Panc1 (cell line): ENCODE measurements at regions of chr10 and their contacts with region 1.

Region 1: DNA sequence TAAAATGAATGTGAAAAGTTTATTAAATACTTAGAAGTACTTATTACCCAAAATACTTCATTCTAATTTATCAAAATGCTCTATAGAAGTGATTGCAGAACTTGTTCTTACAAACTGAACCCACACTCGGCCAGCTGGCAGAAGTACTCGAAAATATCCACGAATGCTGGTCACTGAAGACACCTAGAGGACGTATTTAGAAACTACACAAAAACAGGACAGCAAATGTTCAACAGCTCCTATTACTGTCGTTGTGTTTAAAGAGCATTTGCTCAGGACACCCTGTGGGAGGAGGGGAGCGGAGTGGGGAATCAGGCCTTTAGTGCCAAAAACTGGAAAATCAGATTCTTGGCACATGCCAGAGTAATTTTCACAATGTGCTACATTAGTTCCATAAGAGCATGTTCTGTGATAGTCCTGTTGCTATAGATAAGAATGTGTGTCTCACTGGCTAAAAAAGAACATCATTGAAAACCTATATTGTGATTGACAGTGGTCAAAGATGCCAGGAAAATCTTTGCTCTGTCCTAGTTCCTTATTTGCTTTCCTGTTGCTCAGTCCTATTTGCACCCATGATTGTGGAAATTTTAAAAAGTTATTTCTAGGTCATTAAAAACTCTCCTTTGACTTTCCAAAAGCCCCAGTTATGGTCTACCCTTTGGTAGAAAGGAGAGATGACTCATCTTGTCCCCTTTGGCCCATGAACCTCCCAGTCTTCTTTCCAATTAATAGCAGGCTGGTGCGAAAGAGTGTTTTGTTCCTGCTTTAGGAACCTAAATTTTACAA is 49.0 kb upstream of the NRBF2 start:
- DNase-seq: peak; percentile 77
- ATAC-seq: peak; percentile 92
- H3K4me3 ChIP-seq: no peak overlapping the region
- H3K27ac ChIP-seq: no peak overlapping the region
- H3K4me1 ChIP-seq: no peaks in the 10 kb centered on the region
- H3K27me3 ChIP-seq: peaks cover 4% of the 10 kb centered on the region; the same call in 1 of the 2 replicates
- CTCF ChIP-seq: peak; percentile 86

Region 2: GRCh38 chr10:61280303-61280702 is 1803.8 kb before region 1 on chr10:
- CTCF ChIA-PET with region 1: no interaction called
- POLR2A ChIA-PET with region 1: no interaction called
- in situ Hi-C with region 1: no loop called
- intact Hi-C with region 1: no loop called
- DNase-seq: no peak
- ATAC-seq: no peak
- H3K4me3 ChIP-seq: no peak overlapping the region
- H3K27ac ChIP-seq: no peak overlapping the region
- H3K4me1 ChIP-seq: no peaks in the 10 kb centered on the region
- H3K27me3 ChIP-seq: no peaks in the 10 kb centered on the region
- CTCF ChIP-seq: no peak

Region 3: DNA sequence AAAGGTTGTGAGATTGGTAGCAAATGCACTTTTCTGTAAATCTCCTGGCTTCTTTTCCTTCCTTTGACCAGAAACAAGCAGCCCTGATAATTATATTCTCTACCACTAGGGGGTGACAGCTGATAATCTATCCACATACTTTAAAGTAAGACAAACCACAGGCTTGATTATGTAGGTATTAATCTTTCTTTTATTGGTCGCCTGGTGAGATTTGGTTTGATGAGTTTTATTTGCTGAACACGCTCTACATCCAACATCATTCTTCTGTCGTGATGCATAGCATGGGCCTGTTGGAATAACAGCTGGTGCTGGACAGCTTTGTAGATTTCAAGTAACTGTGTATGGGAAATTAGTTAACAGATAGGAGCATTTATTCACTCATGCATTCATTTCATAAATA is 646.4 kb before region 1 on chr10:
- CTCF ChIA-PET with region 1: interaction called, 5 read pairs
- POLR2A ChIA-PET with region 1: no interaction called
- in situ Hi-C with region 1: no loop called
- intact Hi-C with region 1: loop called (anchors 5 kb)
- DNase-seq: no peak
- ATAC-seq: peak; percentile 82
- H3K4me3 ChIP-seq: no peak overlapping the region
- H3K27ac ChIP-seq: no peak overlapping the region
- H3K4me1 ChIP-seq: peaks cover 11% of the 10 kb centered on the region
- H3K27me3 ChIP-seq: no peaks in the 10 kb centered on the region
- CTCF ChIP-seq: peak; percentile 86

Region 4: DNA sequence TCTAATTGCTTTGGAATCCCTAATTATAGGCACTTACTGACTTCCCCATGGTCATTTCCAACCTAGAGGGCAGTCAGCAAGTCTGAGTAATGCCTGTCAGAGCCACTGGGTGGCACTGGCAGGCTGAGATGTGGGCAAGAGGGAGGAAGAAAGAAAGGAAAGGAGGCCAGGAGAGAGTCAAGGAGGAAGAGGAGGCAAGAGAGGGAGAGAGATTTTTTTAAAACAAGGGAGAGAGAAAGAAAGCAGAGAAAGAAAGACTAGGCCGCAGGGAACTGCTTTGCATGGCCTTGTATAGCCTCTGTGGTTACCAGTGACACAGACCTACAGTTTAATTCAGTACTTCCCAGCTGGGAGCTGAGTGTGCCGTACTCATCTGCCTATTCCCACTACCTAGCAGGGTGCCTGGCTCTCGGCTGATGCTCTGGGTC is 490.0 kb before region 1 on chr10:
- CTCF ChIA-PET with region 1: no interaction called
- POLR2A ChIA-PET with region 1: no interaction called
- in situ Hi-C with region 1: no loop called
- intact Hi-C with region 1: loop called (anchors 5 kb)
- DNase-seq: peak; percentile 58
- ATAC-seq: peak; percentile 93
- H3K4me3 ChIP-seq: no peak overlapping the region
- H3K27ac ChIP-seq: no peak overlapping the region
- H3K4me1 ChIP-seq: no peaks in the 10 kb centered on the region
- H3K27me3 ChIP-seq: no peaks in the 10 kb centered on the region; the same call in 1 of the 2 replicates
- CTCF ChIP-seq: peak; percentile 97